ENCODE measurements at regions of chr19 and their contacts with region 1.

Region 1: DNA sequence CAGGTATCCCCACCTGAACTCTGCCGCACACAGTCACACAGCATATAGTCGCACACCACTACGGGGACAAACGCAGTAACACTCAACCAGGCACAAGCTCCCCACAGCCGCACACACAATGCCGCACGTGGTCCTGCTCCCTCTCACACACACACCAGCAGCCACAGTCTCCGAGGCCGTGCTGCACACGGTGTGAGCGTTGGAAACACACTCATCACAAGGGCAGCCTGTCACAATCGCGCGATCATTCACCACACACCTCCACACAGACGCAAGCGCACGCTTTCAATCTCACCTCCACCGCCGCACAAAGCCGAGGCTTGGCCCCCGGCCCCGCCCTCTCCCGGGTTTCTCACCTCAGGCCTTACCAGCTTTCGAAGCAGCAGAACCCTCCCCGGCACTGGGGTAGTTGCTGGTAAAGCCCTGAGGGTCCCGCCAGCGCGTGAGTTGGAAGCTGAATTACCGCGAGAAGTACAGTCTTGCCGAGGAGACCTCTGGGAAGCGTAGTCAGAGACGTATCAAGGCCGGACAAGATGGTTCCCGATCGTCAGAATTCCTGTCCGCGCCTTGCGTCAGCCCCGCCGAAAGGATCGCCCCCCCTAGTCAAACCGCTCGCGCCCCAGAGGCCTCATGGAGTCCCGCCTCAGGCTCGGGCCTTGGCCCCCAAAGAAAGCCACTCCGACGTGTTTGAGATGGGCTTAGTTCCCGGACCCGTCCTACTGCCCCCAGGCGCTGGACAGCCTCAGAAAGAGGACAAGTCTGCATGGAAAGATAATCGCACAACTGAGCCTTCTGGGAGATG is at the start of gene ZNF566:
- DNase-seq: peak; percentile 79
- H3K4me3 ChIP-seq: peak within 1 kb of the TSS; percentile 51
- H3K27me3 ChIP-seq: no peaks in the 10 kb centered on the region
- CTCF ChIP-seq: 0 out of 2 replicates have a peak, but pooled peaks have one; percentile 6
- polyA plus RNA-seq, gene ZNF566: 3.6 and 3.7 TPM in 2 replicates

Region 2: DNA sequence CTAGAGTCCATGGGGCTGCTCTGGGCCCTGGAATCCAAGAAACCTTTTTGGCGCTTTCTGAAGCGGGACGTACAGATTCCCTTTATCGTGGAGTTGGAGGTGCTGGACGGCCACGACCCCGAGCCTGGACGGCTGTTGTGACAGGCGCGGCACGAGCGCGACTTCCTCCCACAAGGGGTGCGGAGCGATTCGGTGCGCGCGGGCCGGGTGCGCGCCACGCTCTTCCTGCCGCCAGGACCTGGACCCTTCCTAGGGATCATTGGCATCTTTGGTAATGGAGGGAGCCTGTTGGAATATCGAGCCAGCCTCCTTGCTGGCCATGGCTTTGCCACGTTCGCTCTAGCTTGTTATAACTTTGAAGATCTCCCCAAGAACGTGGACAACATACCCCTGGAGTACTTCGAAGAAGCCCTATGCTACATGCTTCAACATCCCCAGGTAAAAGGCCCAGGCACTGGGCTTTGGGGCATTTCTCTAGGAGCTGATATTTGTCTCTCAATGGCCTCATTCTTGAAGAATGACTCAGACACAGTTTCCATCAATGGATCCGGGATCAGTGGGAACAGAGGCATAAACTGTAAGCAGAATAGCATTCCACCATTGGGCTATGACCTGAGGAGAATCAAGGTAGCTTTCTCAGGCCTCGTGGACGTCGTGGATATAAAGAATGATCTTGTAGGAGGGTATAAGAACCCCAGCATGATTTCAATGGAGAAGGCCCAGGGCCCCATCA is 67.4 kb before region 1 on chr19:
- CTCF ChIA-PET with region 1: no interaction called
- POLR2A ChIA-PET with region 1: interaction called, 10 read pairs
- DNase-seq: no peak
- H3K4me3 ChIP-seq: peak overlapping the region; percentile 38
- H3K27me3 ChIP-seq: no peaks in the 10 kb centered on the region
- CTCF ChIP-seq: no peak

Region 3: GRCh38 chr19:36514012-36514612 is 24.8 kb after region 1 on chr19:
- CTCF ChIA-PET with region 1: no interaction called
- POLR2A ChIA-PET with region 1: no interaction called
- DNase-seq: no peak
- H3K4me3 ChIP-seq: no peak overlapping the region
- H3K27me3 ChIP-seq: no peaks in the 10 kb centered on the region
- CTCF ChIP-seq: no peak

Measured in BJ (cell line).